ENCODE measurements at regions of chrX and their contacts with region 1.

Region 1: GRCh38 chrX:101904983-101905382 is 26.8 kb downstream of the ZMAT1 start:
- DNase-seq: no peak
- ATAC-seq: no peak
- H3K4me3 ChIP-seq: no peak overlapping the region
- H3K4me3 Mint-ChIP-seq: no peak overlapping the region
- H3K27ac ChIP-seq: no peak overlapping the region
- H3K27ac Mint-ChIP-seq: no peak overlapping the region
- H3K4me1 ChIP-seq: no peaks in the 10 kb centered on the region
- H3K4me1 Mint-ChIP-seq: no peaks in the 10 kb centered on the region
- H3K27me3 ChIP-seq: no peaks in the 10 kb centered on the region
- H3K27me3 Mint-ChIP-seq: no peaks in the 10 kb centered on the region

Region 2: GRCh38 chrX:101257448-101258258 is 647.3 kb before region 1 on chrX:
- CTCF ChIA-PET with region 1: interaction called in 1 of 2 experiments, 11 read pairs
- POLR2A ChIA-PET with region 1: no interaction called
- DNase-seq: no peak
- ATAC-seq: peak in 2 of 4 experiments; percentile 33 to 44
- H3K4me3 ChIP-seq: no peak overlapping the region
- H3K4me3 Mint-ChIP-seq: peak overlapping the region in 1 of 3 donors; percentile 29
- H3K27ac ChIP-seq: no peak overlapping the region
- H3K27ac Mint-ChIP-seq: peak overlapping the region in 1 of 2 donors; percentile 29
- H3K4me1 ChIP-seq: peaks cover 0 to 4% of the 10 kb centered on the region in 2 experiments
- H3K4me1 Mint-ChIP-seq: peaks cover 10 to 15% (median 11%) of the 10 kb centered on the region in 3 donors
- H3K27me3 ChIP-seq: no peaks in the 10 kb centered on the region
- H3K27me3 Mint-ChIP-seq: peaks cover 0 to 8% of the 10 kb centered on the region in 2 donors